ENCODE measurements at regions of chr5 and their contacts with region 1.

Region 1: GRCh38 chr5:7202846-7203245 is 193.1 kb upstream of the ADCY2 start:
- DNase-seq: no peak
- ATAC-seq: no peak
- H3K4me3 Mint-ChIP-seq: no peak overlapping the region
- H3K27ac Mint-ChIP-seq: no peak overlapping the region
- H3K4me1 Mint-ChIP-seq: no peaks in the 10 kb centered on the region
- H3K27me3 Mint-ChIP-seq: no peaks in the 10 kb centered on the region
- CTCF ChIP-seq: no peak

Region 2: GRCh38 chr5:7169240-7169878 is 33.5 kb before region 1 on chr5:
- CTCF ChIA-PET with region 1: no interaction called
- POLR2A ChIA-PET with region 1: no interaction called
- intact Hi-C with region 1: loop called (anchors 5 kb)
- DNase-seq: no peak
- ATAC-seq: no peak
- H3K4me3 Mint-ChIP-seq: no peak overlapping the region
- H3K27ac Mint-ChIP-seq: no peak overlapping the region
- H3K4me1 Mint-ChIP-seq: no peaks in the 10 kb centered on the region
- H3K27me3 Mint-ChIP-seq: no peaks in the 10 kb centered on the region
- CTCF ChIP-seq: no peak